ENCODE measurements at regions of chr1 and their contacts with region 1.

Region 1: GRCh38 chr1:85607126-85607912 is 26.8 kb downstream of the CCN1 start:
- DNase-seq: peak; percentile 99
- H3K4me3 ChIP-seq: no peak overlapping the region
- H3K27ac ChIP-seq: peak overlapping the region; percentile 99
- H3K27me3 ChIP-seq: no peaks in the 10 kb centered on the region
- CTCF ChIP-seq: no peak

Region 2: GRCh38 chr1:85484264-85484663 is 123.1 kb before region 1 on chr1:
- CTCF ChIA-PET with region 1: no interaction called
- POLR2A ChIA-PET with region 1: no interaction called
- DNase-seq: no peak
- H3K4me3 ChIP-seq: no peak overlapping the region
- H3K27ac ChIP-seq: no peak overlapping the region
- H3K27me3 ChIP-seq: no peaks in the 10 kb centered on the region
- CTCF ChIP-seq: no peak

Region 3: GRCh38 chr1:85628791-85629531 is 21.6 kb after region 1 on chr1:
- CTCF ChIA-PET with region 1: interaction called, 3 read pairs
- POLR2A ChIA-PET with region 1: interaction called, 88 read pairs
- DNase-seq: peak; percentile 92
- H3K4me3 ChIP-seq: peak overlapping the region; percentile 40
- H3K27ac ChIP-seq: peak overlapping the region; percentile 94
- H3K27me3 ChIP-seq: no peaks in the 10 kb centered on the region
- CTCF ChIP-seq: no peak

Region 4: DNA sequence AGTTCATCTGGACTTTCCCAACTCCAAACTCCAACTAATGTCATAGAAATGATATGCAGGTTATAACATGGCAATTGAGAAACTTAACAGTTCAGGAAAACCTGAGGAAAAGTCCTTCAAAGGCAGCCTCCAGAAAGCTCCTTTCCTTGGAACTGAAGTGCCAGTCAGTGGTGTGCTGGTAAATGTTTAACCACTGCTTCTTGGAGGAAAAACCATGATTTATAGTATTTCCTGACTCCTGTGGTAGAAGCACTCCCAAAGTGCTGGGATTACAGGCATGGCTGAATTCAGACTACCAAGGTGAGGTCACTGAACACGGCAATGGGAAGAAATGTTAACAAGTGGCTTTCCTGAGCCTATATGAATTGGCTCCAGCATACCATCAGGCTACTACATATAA is 127.6 kb after region 1 on chr1:
- CTCF ChIA-PET with region 1: no interaction called
- POLR2A ChIA-PET with region 1: no interaction called
- DNase-seq: no peak
- H3K4me3 ChIP-seq: no peak overlapping the region
- H3K27ac ChIP-seq: no peak overlapping the region
- H3K27me3 ChIP-seq: no peaks in the 10 kb centered on the region
- CTCF ChIP-seq: no peak

Region 5: DNA sequence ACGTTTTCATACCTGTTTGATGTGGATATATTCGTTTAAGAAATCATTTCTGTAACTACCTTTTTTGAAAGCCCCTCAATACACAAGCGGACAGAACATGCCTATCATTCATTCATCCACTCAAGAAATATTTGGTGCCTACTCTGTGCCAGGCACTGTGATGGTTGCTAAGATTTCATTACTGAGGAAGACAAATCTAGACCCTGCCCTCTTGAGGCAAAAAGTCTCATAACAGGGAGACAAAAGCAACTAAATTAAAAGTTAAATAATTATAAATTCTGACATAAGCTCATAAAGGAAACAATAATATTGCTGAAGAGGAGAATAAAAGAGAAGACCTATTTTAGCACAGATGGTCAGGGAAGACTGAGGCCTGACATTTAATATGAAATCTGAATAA is 304.4 kb after region 1 on chr1:
- CTCF ChIA-PET with region 1: no interaction called
- POLR2A ChIA-PET with region 1: no interaction called
- DNase-seq: no peak
- H3K4me3 ChIP-seq: no peak overlapping the region
- H3K27ac ChIP-seq: no peak overlapping the region
- H3K27me3 ChIP-seq: no peaks in the 10 kb centered on the region
- CTCF ChIP-seq: peak; percentile 44

Measured in AG04450 (cell line).